MCF 10A (cell line): ENCODE measurements at regions of chr1 and their contacts with region 1.

Region 1: GRCh38 chr1:192904438-192904895 is 95.6 kb downstream of the RGS2 start:
- DNase-seq: peak; percentile 96
- H3K4me3 Mint-ChIP-seq: peak overlapping the region; percentile 33
- H3K27ac Mint-ChIP-seq: peak overlapping the region; percentile 92
- H3K4me1 Mint-ChIP-seq: peaks cover 66% of the 10 kb centered on the region
- H3K27me3 Mint-ChIP-seq: no peaks in the 10 kb centered on the region
- CTCF ChIP-seq: no peak

Region 2: DNA sequence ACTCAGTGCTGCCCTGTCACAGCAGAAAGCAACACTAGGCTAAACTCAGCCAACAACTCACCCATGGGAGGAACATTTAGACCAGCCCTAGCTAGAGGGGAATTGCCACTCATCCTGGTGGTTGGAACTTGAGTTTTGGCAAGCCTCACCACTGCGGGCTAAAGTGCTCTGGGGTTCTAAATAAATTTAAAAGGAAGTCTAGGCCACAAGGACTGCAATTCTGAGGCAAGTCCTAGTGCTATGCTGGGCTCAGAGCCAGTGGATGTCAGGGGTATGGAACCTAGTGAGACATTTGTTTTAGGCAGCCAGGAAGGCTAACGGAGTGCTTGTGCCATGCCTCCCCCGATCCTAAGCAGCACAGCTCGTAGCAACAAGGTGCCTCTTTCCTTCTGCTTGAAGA is 190.5 kb before region 1 on chr1:
- CTCF ChIA-PET with region 1: no interaction called
- POLR2A ChIA-PET with region 1: no interaction called
- intact Hi-C with region 1: no loop called
- DNase-seq: no peak
- H3K4me3 Mint-ChIP-seq: no peak overlapping the region
- H3K27ac Mint-ChIP-seq: no peak overlapping the region
- H3K4me1 Mint-ChIP-seq: no peaks in the 10 kb centered on the region
- H3K27me3 Mint-ChIP-seq: no peaks in the 10 kb centered on the region
- CTCF ChIP-seq: no peak

Region 3: GRCh38 chr1:192826791-192827477 is 77.5 kb before region 1 on chr1:
- CTCF ChIA-PET with region 1: interaction called, 3 read pairs
- POLR2A ChIA-PET with region 1: interaction called, 24 read pairs
- intact Hi-C with region 1: loop called (anchors 5 kb)
- DNase-seq: peak; percentile 30
- H3K4me3 Mint-ChIP-seq: no peak overlapping the region
- H3K27ac Mint-ChIP-seq: no peak overlapping the region
- H3K4me1 Mint-ChIP-seq: peaks cover 13% of the 10 kb centered on the region
- H3K27me3 Mint-ChIP-seq: no peaks in the 10 kb centered on the region
- CTCF ChIP-seq: no peak

Region 4: DNA sequence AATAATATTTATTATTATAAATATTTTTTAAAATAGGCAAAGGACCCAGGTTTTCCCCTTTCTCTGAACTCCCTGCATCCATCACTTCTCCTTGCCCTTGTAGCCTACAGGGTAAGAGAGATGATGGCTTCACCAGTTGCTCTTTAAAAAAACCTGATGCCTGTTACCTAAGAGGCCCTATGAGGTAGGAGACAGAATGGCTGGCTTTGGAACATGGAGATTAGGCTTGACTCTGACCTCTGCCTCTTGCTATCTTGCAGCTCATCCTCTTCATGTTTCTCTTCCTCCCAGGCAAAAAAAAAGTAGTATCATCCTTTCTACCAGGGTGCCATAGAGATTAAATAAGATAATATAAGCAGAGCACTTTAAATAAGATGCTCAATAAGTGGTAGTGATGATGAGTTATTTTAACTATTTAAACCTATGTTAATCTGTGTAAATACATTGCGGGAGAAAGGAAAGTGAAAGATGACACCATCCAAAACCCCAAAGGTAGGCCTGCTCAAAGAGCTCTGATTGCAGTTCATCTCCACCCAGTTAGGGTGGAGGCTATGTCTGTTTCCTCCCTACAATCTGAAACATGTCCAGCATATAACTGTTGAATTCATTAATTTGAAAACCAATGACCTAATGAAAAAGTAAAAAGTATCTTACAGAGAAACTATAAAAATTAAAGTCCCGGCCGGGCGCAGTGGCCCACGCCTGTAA is 43.8 kb before region 1 on chr1:
- CTCF ChIA-PET with region 1: interaction called, 3 read pairs
- POLR2A ChIA-PET with region 1: interaction called, 19 read pairs
- intact Hi-C with region 1: no loop called
- DNase-seq: no peak
- H3K4me3 Mint-ChIP-seq: no peak overlapping the region
- H3K27ac Mint-ChIP-seq: no peak overlapping the region
- H3K4me1 Mint-ChIP-seq: peaks cover 12% of the 10 kb centered on the region
- H3K27me3 Mint-ChIP-seq: no peaks in the 10 kb centered on the region
- CTCF ChIP-seq: no peak

Region 5: GRCh38 chr1:192920412-192920811 is 15.9 kb after region 1 on chr1:
- CTCF ChIA-PET with region 1: interaction called, 8 read pairs
- POLR2A ChIA-PET with region 1: interaction called, 36 read pairs
- intact Hi-C with region 1: no loop called
- DNase-seq: no peak
- H3K4me3 Mint-ChIP-seq: no peak overlapping the region
- H3K27ac Mint-ChIP-seq: no peak overlapping the region
- H3K4me1 Mint-ChIP-seq: peaks cover 5% of the 10 kb centered on the region
- H3K27me3 Mint-ChIP-seq: no peaks in the 10 kb centered on the region
- CTCF ChIP-seq: no peak

Region 6: DNA sequence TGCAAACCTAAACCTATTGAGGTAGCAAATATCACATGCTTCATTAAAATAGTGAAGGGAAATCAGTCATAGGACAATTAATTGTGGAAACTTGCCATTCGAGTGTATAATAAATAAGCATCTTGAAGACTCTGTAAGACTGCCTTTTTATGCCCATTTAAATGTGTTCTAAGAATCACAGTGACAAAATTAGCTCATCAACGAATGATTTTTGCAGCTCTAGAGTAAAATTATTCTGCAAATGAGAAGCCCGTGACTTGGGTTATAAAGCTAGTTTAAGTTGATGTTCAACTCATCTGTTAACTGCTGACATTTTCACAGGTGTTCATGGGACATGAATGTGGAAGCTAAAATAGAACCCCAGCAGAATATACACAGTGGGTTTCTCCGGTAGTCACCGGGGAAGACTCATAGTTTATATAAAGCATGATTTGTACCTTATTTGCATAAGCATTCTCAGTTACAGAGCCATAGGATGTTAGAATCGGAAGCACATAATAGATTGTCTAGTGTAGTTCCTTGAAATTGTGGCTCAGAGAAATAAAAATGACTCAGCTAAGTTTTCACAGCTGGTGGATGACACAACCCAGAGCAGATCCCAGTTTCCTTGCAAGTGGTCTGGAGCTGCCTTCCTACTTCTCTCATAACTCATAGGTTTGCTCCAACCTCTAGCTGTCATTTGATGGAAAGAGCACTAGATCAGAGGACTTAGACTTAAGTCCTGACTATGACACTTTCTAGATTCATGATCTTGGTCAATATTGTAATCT is 47.4 kb after region 1 on chr1:
- CTCF ChIA-PET with region 1: no interaction called
- POLR2A ChIA-PET with region 1: interaction called, 16 read pairs
- intact Hi-C with region 1: no loop called
- DNase-seq: peak; percentile 85
- H3K4me3 Mint-ChIP-seq: no peak overlapping the region
- H3K27ac Mint-ChIP-seq: peak overlapping the region; percentile 56
- H3K4me1 Mint-ChIP-seq: peaks cover 14% of the 10 kb centered on the region
- H3K27me3 Mint-ChIP-seq: no peaks in the 10 kb centered on the region
- CTCF ChIP-seq: no peak

Region 7: GRCh38 chr1:193059268-193060225 is 155.1 kb after region 1 on chr1 and contains the starts of genes RO60 and UCHL5:
- CTCF ChIA-PET with region 1: interaction called, 5 read pairs
- POLR2A ChIA-PET with region 1: interaction called, 13 read pairs
- intact Hi-C with region 1: no loop called
- DNase-seq: peak; percentile 100
- H3K4me3 Mint-ChIP-seq: peak within 1 kb of the TSS; percentile 87
- H3K27ac Mint-ChIP-seq: peak within 1 kb of the TSS; percentile 97
- H3K4me1 Mint-ChIP-seq: peaks cover 38% of the 10 kb centered on the region
- H3K27me3 Mint-ChIP-seq: no peaks in the 10 kb centered on the region
- CTCF ChIP-seq: no peak
- total RNA-seq, gene RO60: 128 and 135 TPM in 2 replicates
- total RNA-seq, gene UCHL5: 79.2 and 94.4 TPM in 2 replicates

Region 8: DNA sequence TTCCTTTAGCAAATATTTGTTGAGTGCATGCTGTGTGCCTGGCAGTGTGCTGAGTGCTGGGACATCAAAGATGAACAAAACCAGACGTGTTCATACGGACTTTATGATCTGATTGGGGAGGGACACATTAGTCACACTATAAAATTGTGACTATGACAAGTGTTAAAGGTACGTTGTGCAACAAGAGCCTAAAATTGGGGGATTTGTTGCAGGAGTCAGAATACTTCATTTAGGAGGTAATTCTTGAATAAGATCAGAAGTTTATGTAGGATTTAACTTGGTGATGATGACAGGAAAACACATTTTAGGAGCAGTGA is 252.3 kb after region 1 on chr1:
- CTCF ChIA-PET with region 1: no interaction called
- POLR2A ChIA-PET with region 1: no interaction called
- intact Hi-C with region 1: no loop called
- DNase-seq: no peak
- H3K4me3 Mint-ChIP-seq: no peak overlapping the region
- H3K27ac Mint-ChIP-seq: no peak overlapping the region
- H3K4me1 Mint-ChIP-seq: peaks cover 23% of the 10 kb centered on the region
- H3K27me3 Mint-ChIP-seq: no peaks in the 10 kb centered on the region
- CTCF ChIP-seq: no peak